ENCODE measurements at regions of chr17 and their contacts with region 1.

Region 1: GRCh38 chr17:64155751-64156544 is 26.0 kb upstream of the ERN1 start:
- DNase-seq: peak; percentile 75 to 91
- ATAC-seq: peak; percentile 92 to 96 (median 94)
- H3K4me3 ChIP-seq: no peak overlapping the region
- H3K27ac ChIP-seq: peak overlapping the region; percentile 88
- H3K4me1 ChIP-seq: peaks cover 87% of the 10 kb centered on the region
- H3K27me3 ChIP-seq: no peaks in the 10 kb centered on the region
- CTCF ChIP-seq: no peak

Region 2: GRCh38 chr17:63827002-63827771 is 328.8 kb before region 1 on chr17 and contains the starts of genes FTSJ3 and PSMC5:
- intact Hi-C with region 1: no loop called
- DNase-seq: peak; percentile 96 to 99
- ATAC-seq: peak; percentile 91 to 95 (median 93)
- H3K4me3 ChIP-seq: peak within 1 kb of the TSS; percentile 93
- H3K27ac ChIP-seq: peak within 1 kb of the TSS; percentile 97
- H3K4me1 ChIP-seq: peaks cover 32% of the 10 kb centered on the region
- H3K27me3 ChIP-seq: no peaks in the 10 kb centered on the region
- CTCF ChIP-seq: peak; percentile 40
- total RNA-seq, gene FTSJ3: 20.1 to 26.2 (median 24.8) TPM
- total RNA-seq, gene PSMC5: 147 to 224 (median 176) TPM

Region 3: DNA sequence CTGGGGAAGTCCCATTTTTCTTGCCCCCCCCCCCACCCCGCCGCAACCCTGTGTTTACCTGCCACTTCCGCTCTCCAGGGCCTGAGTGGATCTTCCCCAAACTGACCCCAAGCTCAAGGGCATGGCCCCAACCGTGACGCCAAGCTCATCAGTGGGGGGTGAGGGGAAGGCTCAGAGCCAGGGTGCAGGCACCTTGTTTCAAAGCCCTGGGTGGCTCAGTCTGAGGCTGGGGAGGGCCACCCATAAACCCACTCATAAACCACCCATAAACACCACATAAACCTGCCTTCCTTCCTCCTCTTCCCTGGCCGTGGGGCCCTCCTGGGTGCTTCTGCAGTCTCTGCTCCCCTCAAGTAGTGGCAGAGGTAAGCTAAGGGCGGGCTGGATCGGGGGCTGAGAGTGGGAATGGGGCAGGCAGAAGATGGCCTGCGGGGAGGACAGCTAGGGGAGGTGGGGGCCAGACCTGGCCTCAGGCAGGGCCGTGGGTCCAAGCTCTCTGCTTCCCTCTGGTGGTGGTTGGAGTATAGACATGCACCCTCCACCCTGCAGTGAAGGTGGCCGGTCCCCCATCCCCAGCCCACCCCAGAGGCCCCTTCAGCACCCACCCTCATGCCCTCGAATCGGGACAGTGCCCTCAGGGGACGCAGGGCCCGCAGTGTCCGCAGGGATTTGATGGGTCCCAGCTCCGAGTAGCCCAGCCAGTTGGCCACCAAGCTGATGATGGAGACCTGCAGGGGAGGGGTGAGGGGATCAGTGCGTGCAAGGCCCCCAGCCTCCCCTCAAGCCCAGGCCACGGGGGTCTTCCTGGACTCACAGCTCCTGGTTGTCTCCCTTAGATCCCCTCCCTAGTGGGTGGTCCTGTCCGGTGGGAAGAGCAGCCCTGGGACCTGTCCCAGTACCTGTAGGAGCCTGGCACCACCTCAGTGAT is 209.2 kb before region 1 on chr17:
- intact Hi-C with region 1: no loop called
- DNase-seq: peak in 1 of 2 donors; percentile 76
- ATAC-seq: peak; percentile 56 to 65 (median 63)
- H3K4me3 ChIP-seq: no peak overlapping the region
- H3K27ac ChIP-seq: peak overlapping the region; percentile 16
- H3K4me1 ChIP-seq: peaks cover 37% of the 10 kb centered on the region
- H3K27me3 ChIP-seq: no peaks in the 10 kb centered on the region
- CTCF ChIP-seq: peak; percentile 73

Region 4: DNA sequence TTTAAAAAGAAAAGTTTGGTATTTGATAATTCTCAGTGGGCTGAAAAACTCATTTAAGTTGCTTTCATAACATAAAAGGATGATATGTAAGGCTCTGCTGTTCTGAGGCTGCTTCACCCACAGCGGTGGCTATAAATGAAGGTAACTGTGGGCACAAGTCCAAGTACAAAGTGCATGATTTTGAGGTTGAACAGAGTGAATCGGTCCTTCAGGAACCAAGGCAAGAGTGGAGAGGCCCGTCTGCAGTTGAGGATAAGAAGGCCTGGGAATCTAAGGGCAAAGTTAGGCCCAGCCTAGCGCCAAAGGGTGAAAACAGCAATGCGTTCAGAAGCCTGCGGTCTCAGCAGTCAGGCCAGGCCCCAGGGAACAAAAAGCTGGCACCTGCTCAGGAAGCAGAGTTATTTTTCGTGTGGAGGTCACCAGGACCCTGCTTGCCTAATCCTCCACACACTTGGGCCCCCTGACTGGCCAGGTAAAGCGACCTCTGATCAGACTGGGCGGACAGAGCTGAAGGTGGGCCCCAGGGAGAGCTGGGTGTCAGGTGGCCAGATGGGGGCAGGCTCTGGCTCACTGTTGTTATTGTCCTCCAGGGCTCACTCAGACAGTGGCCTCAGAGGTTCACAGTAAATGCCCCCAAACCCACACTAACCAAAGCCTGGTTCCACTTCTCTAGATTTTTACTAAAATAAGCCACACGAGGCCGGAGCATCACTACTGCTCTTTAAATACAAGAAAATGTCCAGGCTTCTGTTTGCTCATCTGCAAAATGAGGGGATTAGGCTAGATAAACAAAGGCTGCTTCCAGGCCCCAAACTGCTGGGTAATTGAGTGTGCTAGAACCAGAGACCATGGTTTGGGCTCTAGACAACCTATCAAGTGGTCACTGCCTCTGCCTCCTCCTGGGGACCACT is 60.6 kb after region 1 on chr17:
- intact Hi-C with region 1: loop called in 1 of 2 experiments (anchors 5 kb)
- DNase-seq: peak; percentile 44 to 71
- ATAC-seq: peak; percentile 69 to 81 (median 75)
- H3K4me3 ChIP-seq: peak overlapping the region; percentile 28
- H3K27ac ChIP-seq: peak overlapping the region; percentile 80
- H3K4me1 ChIP-seq: peaks cover 44% of the 10 kb centered on the region
- H3K27me3 ChIP-seq: no peaks in the 10 kb centered on the region
- CTCF ChIP-seq: no peak

Region 5: GRCh38 chr17:64306850-64307463 is 151.0 kb after region 1 on chr17:
- intact Hi-C with region 1: no loop called
- DNase-seq: peak; percentile 61 to 78
- ATAC-seq: peak in 3 of 4 donors; percentile 46 to 69 (median 50)
- H3K4me3 ChIP-seq: no peak overlapping the region
- H3K27ac ChIP-seq: no peak overlapping the region
- H3K4me1 ChIP-seq: no peaks in the 10 kb centered on the region
- H3K27me3 ChIP-seq: no peaks in the 10 kb centered on the region
- CTCF ChIP-seq: peak; percentile 82